ENCODE measurements at regions of chr20 and their contacts with region 1.

Region 1: DNA sequence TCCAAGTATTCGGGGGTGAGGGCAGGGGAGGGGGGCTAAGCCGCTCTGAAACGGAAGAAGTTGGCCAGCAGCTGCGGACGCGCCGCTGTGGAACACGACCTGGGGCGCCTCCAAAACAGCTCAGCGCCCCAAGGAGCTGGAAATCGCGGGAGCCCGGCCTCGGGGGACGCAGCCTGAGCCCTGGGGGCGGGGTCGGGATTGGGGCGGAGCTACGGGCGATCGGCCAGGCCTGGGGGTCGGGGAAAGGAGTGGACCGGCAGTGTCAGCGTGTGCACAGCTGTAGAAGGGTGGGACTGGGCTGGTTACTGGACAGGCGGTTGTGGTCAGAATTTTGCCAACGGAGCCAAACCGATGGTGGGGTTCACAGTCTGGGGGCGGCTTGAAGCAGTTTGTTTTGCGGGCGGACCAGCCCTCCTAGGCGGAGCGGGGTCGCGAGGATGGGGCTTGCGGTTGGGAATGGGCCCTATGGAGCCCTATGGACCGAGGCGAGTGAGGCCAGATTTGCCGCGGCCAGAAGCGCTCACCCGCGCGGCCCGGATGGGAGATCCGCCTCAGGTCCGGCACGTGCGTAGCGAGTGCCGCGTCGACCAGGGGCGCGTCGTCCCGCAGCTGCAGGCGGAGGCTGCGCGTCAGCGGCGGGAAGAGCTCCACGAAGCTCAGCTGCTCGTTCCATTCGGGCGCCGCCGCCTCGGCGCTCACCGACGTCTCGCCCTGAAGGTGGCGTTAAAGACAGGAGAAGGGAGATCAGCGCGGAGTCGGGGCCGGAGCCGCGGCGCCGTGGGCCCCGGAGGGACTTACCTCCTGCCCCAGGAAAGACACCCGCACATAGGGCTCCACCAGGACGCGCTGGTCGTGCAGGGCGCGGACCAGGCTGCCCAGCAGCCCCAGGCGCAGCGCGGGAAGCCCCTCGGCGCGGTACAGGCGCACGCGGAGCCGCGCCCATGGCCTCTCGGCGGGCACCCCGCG is 14.3 kb upstream of the SPAG4 start:
- DNase-seq: no peak
- H3K4me3 ChIP-seq: peak overlapping the region; percentile 49
- CTCF ChIP-seq: peak; percentile 45

Region 2: GRCh38 chr20:35611482-35611881 is 10.2 kb after region 1 on chr20:
- CTCF ChIA-PET with region 1: interaction called, 10 read pairs
- POLR2A ChIA-PET with region 1: no interaction called
- DNase-seq: no peak
- H3K4me3 ChIP-seq: no peak overlapping the region
- CTCF ChIP-seq: no peak